ENCODE measurements at regions of chr7 and their contacts with region 1.

Region 1: DNA sequence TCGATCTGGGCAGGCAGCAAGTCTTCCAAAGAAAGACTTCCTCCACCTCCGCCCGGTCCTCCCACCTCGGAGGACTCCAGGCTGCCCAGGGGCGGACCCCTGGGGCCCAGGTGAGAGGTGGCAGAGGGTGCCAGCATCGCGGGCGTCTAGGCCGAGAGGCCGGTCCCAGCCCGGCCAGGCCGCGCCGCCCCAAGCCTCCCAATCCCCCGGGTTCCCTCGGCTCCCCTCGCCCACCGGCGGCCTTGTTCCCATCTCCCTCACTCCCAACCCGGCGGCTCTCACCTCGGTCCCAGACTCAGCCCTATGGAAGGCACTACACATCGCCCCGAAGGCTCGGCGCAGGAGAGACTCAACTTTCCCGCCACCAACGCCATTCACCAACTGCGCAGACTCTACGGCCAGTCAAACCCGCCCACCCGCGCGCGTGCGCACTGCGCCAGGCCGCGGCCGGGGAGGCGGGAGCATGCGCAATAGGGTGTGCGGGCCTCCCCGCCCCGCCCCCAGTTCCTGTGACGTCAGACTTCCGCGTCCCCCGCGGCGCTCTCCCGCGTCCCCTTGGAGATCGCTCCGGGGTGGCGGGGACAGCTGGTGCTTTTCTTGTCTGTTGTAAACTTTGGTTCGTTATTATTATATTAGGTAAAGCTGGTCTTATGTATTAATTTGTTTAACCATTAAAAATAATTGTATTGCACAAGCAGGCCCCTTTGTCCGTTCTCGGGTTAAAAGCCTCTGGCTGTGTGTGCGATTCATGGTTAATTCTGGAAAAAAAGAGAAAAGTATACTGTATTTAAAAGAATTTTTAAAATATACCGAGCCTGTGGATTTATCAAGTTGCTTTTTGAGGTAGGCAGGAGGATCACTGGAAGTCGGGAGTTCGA is at the start of gene XRCC2:
- DNase-seq: peak; percentile 85
- ATAC-seq: peak; percentile 95
- H3K4me3 ChIP-seq: peak within 1 kb of the TSS; percentile 54
- H3K27ac ChIP-seq: peak within 1 kb of the TSS; percentile 60
- H3K4me1 ChIP-seq: no peaks in the 10 kb centered on the region
- H3K27me3 ChIP-seq: no peaks in the 10 kb centered on the region
- CTCF ChIP-seq: no peak
- POLR2A ChIP-seq: peak; percentile 92
- RAD21 ChIP-seq: no peak
- total RNA-seq, gene XRCC2: 3.6 and 5.6 TPM in 2 replicates

Region 2: DNA sequence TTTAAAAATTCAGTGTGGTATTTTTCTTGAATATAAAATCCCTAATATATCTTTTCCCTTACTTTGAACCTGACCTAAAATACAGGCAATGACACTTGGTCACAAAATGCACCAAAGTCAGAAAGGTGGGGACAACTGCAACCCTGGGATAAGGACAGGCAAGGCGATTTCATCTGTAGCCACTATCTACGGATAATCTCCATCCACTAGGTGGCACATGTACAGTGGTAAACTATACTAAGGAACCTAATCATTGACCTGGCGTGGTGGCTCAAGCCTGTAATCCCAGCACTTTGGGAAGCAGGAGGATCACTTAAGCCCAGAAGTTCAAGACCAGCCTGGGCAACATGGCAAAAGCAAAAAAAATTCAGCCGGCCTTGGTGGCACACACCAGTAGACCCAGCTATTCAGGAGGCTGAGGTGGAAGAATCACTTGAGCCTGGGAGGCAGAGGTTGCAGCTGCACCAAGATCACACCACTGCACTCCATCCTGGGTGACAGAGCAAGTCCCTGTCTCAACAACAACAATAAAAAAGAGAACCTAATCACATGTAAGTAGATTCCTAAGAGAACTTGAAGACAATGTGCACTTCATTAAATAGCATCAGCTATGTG is 339.1 kb before region 1 on chr7:
- CTCF ChIA-PET with region 1: interaction called, 3 read pairs
- POLR2A ChIA-PET with region 1: no interaction called
- dilution Hi-C with region 1: no loop called
- in situ Hi-C with region 1: loop called (anchors 10 kb)
- intact Hi-C with region 1: no loop called
- DNase-seq: peak; percentile 48
- ATAC-seq: peak; percentile 78
- H3K4me3 ChIP-seq: no peak overlapping the region
- H3K27ac ChIP-seq: no peak overlapping the region
- H3K4me1 ChIP-seq: peaks cover 2% of the 10 kb centered on the region; the same call in 1 of the 2 replicates
- H3K27me3 ChIP-seq: no peaks in the 10 kb centered on the region
- CTCF ChIP-seq: peak; percentile 39
- POLR2A ChIP-seq: no peak
- RAD21 ChIP-seq: peak; percentile 50

Region 3: DNA sequence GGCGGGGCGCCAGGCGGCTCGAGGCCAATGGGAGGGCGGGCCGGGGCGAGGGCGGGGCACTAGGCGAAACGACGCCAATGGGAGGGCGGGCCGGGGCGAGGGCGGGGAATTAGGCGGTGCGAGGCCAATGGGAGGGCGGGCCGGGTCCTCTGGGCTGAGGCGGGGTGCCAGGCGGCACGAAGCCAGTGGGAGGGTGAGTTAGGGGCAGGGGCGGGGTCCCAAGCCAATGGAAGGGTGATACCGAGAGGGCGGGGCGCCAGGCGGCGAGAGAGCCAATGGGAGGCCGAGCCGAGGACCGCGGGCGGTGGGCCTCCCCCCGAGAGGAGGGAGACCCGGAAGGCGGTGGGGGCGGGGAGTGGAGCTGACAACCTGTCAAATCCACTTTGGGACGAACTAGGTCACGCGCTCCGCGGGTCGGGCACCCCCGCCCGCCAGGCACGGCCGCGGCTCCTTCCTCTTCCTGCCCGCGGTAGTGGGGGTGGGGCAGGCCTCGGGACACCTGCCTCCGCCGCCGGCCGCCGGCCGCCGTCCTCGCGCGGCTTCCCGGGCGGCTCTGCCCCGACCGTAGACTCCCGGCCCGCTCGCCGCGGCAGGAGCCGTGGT is 212.2 kb before region 1 on chr7:
- CTCF ChIA-PET with region 1: no interaction called
- POLR2A ChIA-PET with region 1: no interaction called
- dilution Hi-C with region 1: no loop called
- in situ Hi-C with region 1: no loop called
- intact Hi-C with region 1: loop called (anchors 5 kb)
- DNase-seq: peak; percentile 98
- ATAC-seq: peak; percentile 95
- H3K4me3 ChIP-seq: peak overlapping the region; percentile 91
- H3K27ac ChIP-seq: peak overlapping the region; percentile 91
- H3K4me1 ChIP-seq: no peaks in the 10 kb centered on the region; the same call in 1 of the 2 replicates
- H3K27me3 ChIP-seq: no peaks in the 10 kb centered on the region
- CTCF ChIP-seq: no peak
- POLR2A ChIP-seq: peak; percentile 54; the same call in 1 of the 2 replicates
- RAD21 ChIP-seq: no peak